Thyroid gland (tissue), 4 donors: ENCODE measurements at regions of chr1 and their contacts with region 1.

Region 1: DNA sequence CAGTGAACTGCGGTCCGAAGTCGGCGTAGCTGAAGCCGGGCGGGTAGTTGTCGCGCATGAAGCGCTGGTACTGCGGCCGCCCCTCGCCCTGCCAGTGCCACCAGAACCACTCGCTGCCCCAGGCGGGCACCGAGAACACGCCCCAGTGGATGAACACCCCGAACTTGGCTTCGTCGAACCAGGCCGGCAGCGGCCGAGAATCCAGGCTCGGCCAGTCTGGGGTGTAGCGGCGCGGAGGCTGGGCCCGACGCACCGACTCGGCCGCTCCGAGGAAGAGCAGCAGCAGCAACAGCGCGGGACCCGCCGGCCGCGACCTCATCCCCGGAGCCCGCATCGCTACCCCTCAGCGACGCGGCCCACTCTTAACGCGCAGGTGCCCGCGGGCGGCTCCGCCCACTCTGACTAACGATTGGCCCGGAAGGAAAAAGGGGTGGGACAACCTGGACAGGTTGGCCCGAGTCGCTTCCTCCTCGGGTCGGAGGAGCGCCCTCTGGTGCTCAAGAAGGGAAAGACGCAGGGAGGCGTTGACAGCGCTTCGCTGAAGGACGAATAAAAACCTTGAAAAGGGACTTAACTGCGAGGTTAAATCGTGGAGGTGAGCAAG is at the start of gene FUCA1:
- DNase-seq: peak; percentile 96 to 97
- H3K4me3 ChIP-seq: peak within 1 kb of the TSS; percentile 14 to 68 (median 61)
- H3K27ac ChIP-seq: peak within 1 kb of the TSS; percentile 63 to 86 (median 77)
- H3K4me1 ChIP-seq: peaks cover 13 to 14% of the 10 kb centered on the region in 2 donors
- H3K27me3 ChIP-seq: no peaks in the 10 kb centered on the region
- CTCF ChIP-seq: peak; percentile 82 to 99 (median 94)
- POLR2A ChIP-seq: peak; percentile 62 to 97
- total RNA-seq, gene FUCA1: 75.5 to 133 (median 112) TPM

Region 2: DNA sequence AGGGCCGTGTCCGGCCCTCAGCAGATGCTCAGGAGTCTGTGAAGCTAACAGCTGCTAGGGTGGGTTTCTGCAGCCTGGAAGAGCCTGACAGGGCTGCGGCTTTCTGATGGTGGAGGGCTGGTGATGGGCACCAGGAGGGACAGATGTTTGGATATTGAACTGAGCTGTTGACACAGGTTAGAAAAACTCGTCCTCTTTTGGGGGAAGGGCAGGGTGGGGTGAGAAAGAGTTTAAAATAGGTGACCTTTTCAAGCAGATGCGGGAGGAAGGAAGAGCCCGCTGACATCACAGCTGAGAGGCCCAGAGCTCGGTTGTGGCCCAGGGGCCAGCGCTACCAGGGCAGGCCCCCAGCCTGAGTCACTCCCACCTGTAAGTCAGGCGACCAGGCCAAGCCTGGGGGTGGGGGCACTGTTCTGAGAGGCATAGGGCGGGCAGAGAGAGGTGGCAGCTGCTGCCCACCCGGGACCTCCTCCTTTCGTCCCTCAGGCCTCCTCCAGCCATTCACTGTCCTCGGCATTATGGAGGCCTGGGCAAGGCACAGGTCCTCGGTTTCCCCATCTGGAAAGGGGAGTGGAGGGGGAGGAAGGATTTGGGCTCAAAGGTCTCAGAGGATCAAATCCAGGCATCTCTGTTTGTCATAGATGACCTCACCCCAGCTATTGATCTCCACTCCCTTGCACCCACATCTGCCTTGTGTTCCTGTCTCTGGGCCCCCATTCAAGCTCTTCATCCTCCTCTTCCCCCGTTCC is 276.4 kb before region 1 on chr1:
- intact Hi-C with region 1: no loop called
- DNase-seq: peak in 1 of 2 donors; percentile 19
- H3K4me3 ChIP-seq: no peak overlapping the region
- H3K27ac ChIP-seq: peak overlapping the region; percentile 5 to 63 (median 62)
- H3K4me1 ChIP-seq: peaks cover 19 to 62% of the 10 kb centered on the region in 2 donors
- H3K27me3 ChIP-seq: no peaks in the 10 kb centered on the region
- CTCF ChIP-seq: no peak
- POLR2A ChIP-seq: no peak

Region 3: GRCh38 chr1:23727362-23727827 is 140.7 kb before region 1 on chr1:
- intact Hi-C with region 1: no loop called
- DNase-seq: peak; percentile 50 to 73
- H3K4me3 ChIP-seq: no peak overlapping the region
- H3K27ac ChIP-seq: peak overlapping the region; percentile 5 to 74 (median 64)
- H3K4me1 ChIP-seq: peaks cover 20 to 28% of the 10 kb centered on the region in 2 donors
- H3K27me3 ChIP-seq: no peaks in the 10 kb centered on the region
- CTCF ChIP-seq: no peak
- POLR2A ChIP-seq: peak in 1 of 2 donors; percentile 8

Region 4: GRCh38 chr1:23777979-23778814 is 89.9 kb before region 1 on chr1 and contains the start of gene PITHD1:
- intact Hi-C with region 1: loop called (anchors 10 kb)
- DNase-seq: peak; percentile 75 to 76
- H3K4me3 ChIP-seq: peak within 1 kb of the TSS; percentile 33 to 99 (median 90)
- H3K27ac ChIP-seq: peak within 1 kb of the TSS; percentile 76 to 92 (median 79)
- H3K4me1 ChIP-seq: peaks cover 28 to 39% of the 10 kb centered on the region in 2 donors
- H3K27me3 ChIP-seq: no peaks in the 10 kb centered on the region
- CTCF ChIP-seq: no peak
- POLR2A ChIP-seq: peak; percentile 12 to 89
- total RNA-seq, gene PITHD1: 55.3 to 75.8 (median 60.0) TPM

Region 5: DNA sequence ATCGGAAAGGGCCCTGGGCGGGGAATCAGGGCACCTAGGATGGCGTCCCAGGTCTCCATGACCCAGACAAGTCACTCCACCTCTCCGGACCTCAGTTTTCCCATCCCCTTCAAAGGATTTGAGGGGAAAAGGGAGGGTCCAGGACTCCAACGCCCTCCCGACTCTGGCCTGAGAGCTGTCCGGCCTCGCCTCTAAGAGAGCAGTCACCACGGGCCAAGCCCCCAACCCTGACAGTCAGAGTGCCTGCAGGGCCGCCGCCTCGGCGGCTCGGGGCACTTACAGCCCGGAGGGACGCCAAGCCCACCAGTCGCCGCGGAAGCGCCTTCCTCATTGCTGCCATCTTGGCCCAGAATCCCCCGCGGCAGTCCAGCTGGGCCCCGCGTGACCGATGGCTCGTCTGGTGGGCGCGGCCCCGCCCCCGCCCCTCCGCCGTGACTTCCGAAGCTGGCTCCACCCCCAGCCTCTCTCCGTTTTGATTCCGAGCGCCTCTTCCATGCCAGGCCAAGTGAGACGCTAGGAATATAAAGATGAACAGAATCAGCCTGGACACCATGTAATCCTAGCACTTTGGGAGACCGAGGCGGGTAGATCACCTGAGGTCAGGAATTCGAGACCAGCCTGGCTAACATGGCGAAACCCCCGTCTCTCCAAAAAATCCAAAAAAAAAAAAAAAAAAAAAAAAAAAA is 42.8 kb before region 1 on chr1 and contains the start of gene HMGCL:
- intact Hi-C with region 1: loop called (anchors 5 kb)
- DNase-seq: peak; percentile 94 to 95
- H3K4me3 ChIP-seq: peak within 1 kb of the TSS; percentile 84 to 97 (median 87)
- H3K27ac ChIP-seq: peak within 1 kb of the TSS; percentile 91 to 99 (median 91)
- H3K4me1 ChIP-seq: peaks cover 0 to 7% of the 10 kb centered on the region in 2 donors
- H3K27me3 ChIP-seq: no peaks in the 10 kb centered on the region
- CTCF ChIP-seq: no peak
- POLR2A ChIP-seq: peak in 1 of 2 donors; percentile 91
- total RNA-seq, gene HMGCL: 35.8 to 84.3 (median 57.0) TPM

Region 6: DNA sequence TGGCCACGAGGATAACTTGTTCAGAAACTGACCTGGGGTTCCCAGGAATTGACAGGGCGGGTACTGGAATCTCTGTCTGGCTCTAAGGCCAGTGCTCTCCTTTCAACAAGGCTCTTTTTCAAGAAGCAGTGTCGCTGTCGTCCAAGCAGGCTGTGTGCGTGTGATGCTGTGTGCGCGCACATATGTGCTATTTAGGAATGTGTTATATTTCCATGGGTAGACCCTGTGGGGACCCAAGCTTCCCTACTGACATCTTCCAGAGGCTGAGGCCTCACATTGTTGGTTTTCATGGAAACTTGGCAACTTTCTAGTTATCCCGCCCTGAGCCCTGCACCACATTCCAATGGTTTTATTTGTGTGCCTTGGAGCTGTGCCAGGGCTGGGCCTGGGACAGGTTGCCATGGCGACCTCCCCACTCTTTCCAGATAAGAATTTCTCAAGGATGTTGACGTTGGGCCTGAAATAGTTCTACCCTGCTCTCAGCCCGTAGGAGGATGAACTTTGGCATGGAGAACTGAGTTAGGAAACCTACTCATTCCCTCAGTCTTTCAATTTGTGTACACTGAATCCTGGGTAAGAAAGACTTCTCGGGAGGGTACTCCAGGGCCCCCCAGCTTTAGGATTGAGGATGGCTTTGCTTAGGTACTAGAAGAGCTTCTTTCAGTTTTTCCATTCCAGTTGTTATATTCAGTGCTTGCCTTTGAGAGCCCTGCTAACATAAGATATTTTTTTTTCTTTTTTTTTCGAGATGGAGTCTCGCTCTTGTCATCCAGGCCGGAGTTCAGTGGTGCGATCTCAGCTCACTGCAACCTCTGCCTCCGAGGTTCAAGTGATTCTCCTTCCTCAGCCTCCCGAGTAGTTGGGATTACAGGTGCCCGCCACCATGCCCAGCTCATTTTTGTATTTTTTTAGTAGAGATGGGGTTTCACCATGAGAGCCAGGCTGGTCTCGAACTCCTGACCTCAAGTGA is 150.8 kb after region 1 on chr1:
- intact Hi-C with region 1: no loop called
- DNase-seq: peak; percentile 99 to 100
- H3K4me3 ChIP-seq: no peak overlapping the region
- H3K27ac ChIP-seq: peak overlapping the region; percentile 86 to 99 (median 99)
- H3K4me1 ChIP-seq: peaks cover 45 to 77% of the 10 kb centered on the region in 2 donors
- H3K27me3 ChIP-seq: no peaks in the 10 kb centered on the region
- CTCF ChIP-seq: no peak
- POLR2A ChIP-seq: peak in 1 of 2 donors; percentile 57